IMR-90 (cell line): ENCODE measurements at regions of chr1 and their contacts with region 1.

Region 1: GRCh38 chr1:157004806-157005205 is 40.7 kb downstream of the ARHGEF11 start:
- DNase-seq: no peak
- ATAC-seq: no peak
- H3K4me3 ChIP-seq: no peak overlapping the region
- H3K27ac ChIP-seq: no peak overlapping the region
- H3K4me1 ChIP-seq: peaks cover 15% of the 10 kb centered on the region
- H3K27me3 ChIP-seq: no peaks in the 10 kb centered on the region
- CTCF ChIP-seq: no peak
- POLR2A ChIP-seq: no peak
- RAD21 ChIP-seq: no peak

Region 2: GRCh38 chr1:157040802-157041201 is 36.0 kb after region 1 on chr1:
- CTCF ChIA-PET with region 1: interaction called, 4 read pairs
- POLR2A ChIA-PET with region 1: no interaction called
- dilution Hi-C with region 1: no loop called
- in situ Hi-C with region 1: no loop called
- intact Hi-C with region 1: loop called (anchors 5 kb)
- DNase-seq: peak; percentile 81
- ATAC-seq: no peak
- H3K4me3 ChIP-seq: no peak overlapping the region
- H3K27ac ChIP-seq: no peak overlapping the region
- H3K4me1 ChIP-seq: peaks cover 10% of the 10 kb centered on the region; the same call in 1 of the 2 replicates
- H3K27me3 ChIP-seq: no peaks in the 10 kb centered on the region
- CTCF ChIP-seq: no peak
- POLR2A ChIP-seq: no peak
- RAD21 ChIP-seq: no peak

Region 3: GRCh38 chr1:157862114-157863070 is 857.6 kb after region 1 on chr1:
- CTCF ChIA-PET with region 1: no interaction called
- POLR2A ChIA-PET with region 1: no interaction called
- dilution Hi-C with region 1: no loop called
- in situ Hi-C with region 1: no loop called
- intact Hi-C with region 1: no loop called
- DNase-seq: no peak
- ATAC-seq: no peak
- H3K4me3 ChIP-seq: no peak overlapping the region
- H3K27ac ChIP-seq: no peak overlapping the region
- H3K4me1 ChIP-seq: no peaks in the 10 kb centered on the region
- H3K27me3 ChIP-seq: no peaks in the 10 kb centered on the region
- CTCF ChIP-seq: no peak
- POLR2A ChIP-seq: no peak
- RAD21 ChIP-seq: no peak